PC-9 (cell line): ENCODE measurements at regions of chr17 and their contacts with region 1.

Region 1: DNA sequence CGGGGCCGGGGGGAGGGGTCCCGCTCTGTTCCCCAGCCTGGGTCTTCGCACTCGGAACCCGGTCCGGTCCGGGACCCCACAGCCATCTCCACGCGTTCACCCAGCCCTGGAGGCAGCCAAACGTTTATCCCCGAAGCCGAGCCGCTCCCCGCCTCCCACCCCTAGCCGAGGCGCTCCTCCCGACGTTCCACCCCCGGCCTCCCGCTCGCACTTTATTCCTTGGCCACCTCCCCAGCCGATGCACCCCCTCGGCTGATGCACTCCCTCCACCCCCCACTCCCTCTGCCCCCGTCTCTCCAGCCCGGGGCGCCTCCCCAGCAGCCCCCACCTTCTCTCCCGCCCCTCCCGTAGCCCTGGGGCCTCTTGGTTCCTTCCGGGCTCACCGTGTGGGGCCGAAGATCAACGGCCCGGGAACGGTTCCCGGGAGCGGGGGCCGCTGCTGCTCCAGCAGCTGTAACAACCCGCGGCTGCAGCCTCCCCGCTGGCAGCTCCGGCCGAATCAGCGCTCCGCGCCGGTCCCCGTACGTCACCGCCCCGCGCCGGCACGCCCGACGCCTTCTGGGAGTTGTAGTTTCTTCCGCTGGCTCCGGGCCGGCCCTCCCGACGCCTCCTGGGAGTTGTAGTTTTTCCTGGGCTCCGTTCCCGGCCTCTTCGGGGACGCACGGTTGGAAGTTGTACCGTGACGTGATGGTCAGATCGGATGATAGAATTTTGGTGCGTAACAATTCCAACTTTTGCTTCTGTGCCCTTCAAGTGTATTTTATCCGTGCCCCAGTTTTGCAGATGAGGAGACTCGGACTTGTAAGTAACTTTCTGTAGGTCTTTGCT is at the starts of genes LRRC3C and ORMDL3:
- DNase-seq: peak; percentile 77 to 88
- H3K4me3 ChIP-seq: peak within 1 kb of the TSS; percentile 98
- H3K27ac ChIP-seq: peak within 1 kb of the TSS; percentile 89
- H3K4me1 ChIP-seq: peaks cover 35% of the 10 kb centered on the region
- H3K27me3 ChIP-seq: no peaks in the 10 kb centered on the region
- CTCF ChIP-seq: no peak
- total RNA-seq, gene LRRC3C: not detected in 2 replicates
- total RNA-seq, gene ORMDL3: 51.1 and 68.1 TPM in 2 replicates

Region 2: GRCh38 chr17:39852239-39852638 is 75.1 kb before region 1 on chr17:
- CTCF ChIA-PET with region 1: no interaction called
- POLR2A ChIA-PET with region 1: no interaction called
- intact Hi-C with region 1: no loop called
- DNase-seq: no peak
- H3K4me3 ChIP-seq: no peak overlapping the region
- H3K27ac ChIP-seq: no peak overlapping the region
- H3K4me1 ChIP-seq: no peaks in the 10 kb centered on the region
- H3K27me3 ChIP-seq: no peaks in the 10 kb centered on the region
- CTCF ChIP-seq: no peak

Region 3: GRCh38 chr17:39972271-39972670 is 45.0 kb after region 1 on chr17:
- CTCF ChIA-PET with region 1: no interaction called
- POLR2A ChIA-PET with region 1: no interaction called
- intact Hi-C with region 1: no loop called
- DNase-seq: no peak
- H3K4me3 ChIP-seq: no peak overlapping the region
- H3K27ac ChIP-seq: no peak overlapping the region
- H3K4me1 ChIP-seq: no peaks in the 10 kb centered on the region
- H3K27me3 ChIP-seq: 0 out of 2 replicates have a peak, but pooled peaks cover 8% of the 10 kb centered on the region
- CTCF ChIP-seq: no peak

Region 4: GRCh38 chr17:40622509-40622928 is 695.2 kb after region 1 on chr17:
- CTCF ChIA-PET with region 1: interaction called, 11 read pairs
- POLR2A ChIA-PET with region 1: no interaction called
- intact Hi-C with region 1: no loop called
- DNase-seq: no peak
- H3K4me3 ChIP-seq: no peak overlapping the region
- H3K27ac ChIP-seq: no peak overlapping the region
- H3K4me1 ChIP-seq: peaks cover 5% of the 10 kb centered on the region
- H3K27me3 ChIP-seq: no peaks in the 10 kb centered on the region
- CTCF ChIP-seq: no peak